Heart left ventricle (tissue), 16 donors: ENCODE measurements at regions of chr4 and their contacts with region 1.

Region 1: DNA sequence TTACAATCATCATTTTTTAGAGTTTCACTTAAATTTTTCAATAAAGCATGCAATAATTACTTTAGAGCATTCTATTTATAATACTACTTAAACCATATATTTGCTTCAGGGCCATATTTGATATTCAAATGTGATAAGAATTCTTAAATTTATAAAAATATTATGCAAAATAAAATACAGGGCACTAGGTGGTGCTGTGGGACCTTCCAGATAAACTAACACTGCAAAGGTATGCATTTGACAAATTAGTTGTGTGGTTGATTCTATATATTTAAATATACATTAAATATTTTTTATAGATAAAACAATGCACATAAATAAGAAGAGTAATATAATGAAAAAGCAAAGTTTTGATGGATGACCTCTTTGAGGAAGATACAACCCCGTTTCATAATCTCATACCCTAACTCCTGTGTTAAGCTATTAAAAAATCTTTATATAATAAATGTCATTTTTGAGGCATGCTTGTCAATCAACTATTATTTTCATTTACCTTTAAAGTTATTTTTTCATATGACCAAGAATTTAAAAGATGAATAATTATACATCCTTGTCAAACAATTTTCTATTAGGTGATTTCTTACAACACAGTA is 128.4 kb downstream of the REELD1 start:
- DNase-seq: no peak
- ATAC-seq: no peak
- H3K4me3 ChIP-seq: no peak overlapping the region
- H3K27ac ChIP-seq: no peak overlapping the region
- H3K4me1 ChIP-seq: no peaks in the 10 kb centered on the region
- H3K27me3 ChIP-seq: no peaks in the 10 kb centered on the region
- CTCF ChIP-seq: peak; percentile 52 to 79 (median 70)
- POLR2A ChIP-seq: no peak

Region 2: GRCh38 chr4:145956288-145956890 is 386.3 kb before region 1 on chr4:
- intact Hi-C with region 1: loop called in 1 of 10 experiments (anchors 10 kb)
- DNase-seq: peak in 2 of 5 donors; percentile 11 to 22
- ATAC-seq: peak in 1 of 4 donors; percentile 42
- H3K4me3 ChIP-seq: no peak overlapping the region
- H3K27ac ChIP-seq: no peak overlapping the region
- H3K4me1 ChIP-seq: no peaks in the 10 kb centered on the region
- H3K27me3 ChIP-seq: no peaks in the 10 kb centered on the region
- CTCF ChIP-seq: peak; percentile 60 to 80 (median 74)
- POLR2A ChIP-seq: no peak

Region 3: GRCh38 chr4:146243141-146243882 is 99.4 kb before region 1 on chr4:
- intact Hi-C with region 1: loop called in 1 of 10 experiments (anchors 5 kb)
- DNase-seq: peak in 2 of 5 donors; percentile 24 to 65
- ATAC-seq: peak in 1 of 4 donors; percentile 21
- H3K4me3 ChIP-seq: peak overlapping the region in 3 of 12 donors; percentile 1 to 38 (median 4)
- H3K27ac ChIP-seq: peak overlapping the region; percentile 76 to 96 (median 85)
- H3K4me1 ChIP-seq: peaks cover 0 to 54% (median 24%) of the 10 kb centered on the region in 12 donors
- H3K27me3 ChIP-seq: no peaks in the 10 kb centered on the region
- CTCF ChIP-seq: peak; percentile 15 to 58 (median 43)
- POLR2A ChIP-seq: no peak

Region 4: GRCh38 chr4:146273204-146273901 is 69.3 kb before region 1 on chr4:
- intact Hi-C with region 1: no loop called
- DNase-seq: no peak
- ATAC-seq: no peak
- H3K4me3 ChIP-seq: no peak overlapping the region
- H3K27ac ChIP-seq: no peak overlapping the region
- H3K4me1 ChIP-seq: peaks cover 0 to 11% (median 0%) of the 10 kb centered on the region in 12 donors
- H3K27me3 ChIP-seq: no peaks in the 10 kb centered on the region
- CTCF ChIP-seq: no peak
- POLR2A ChIP-seq: no peak

Region 5: GRCh38 chr4:146638801-146639605 is 296.3 kb after region 1 on chr4 and contains the start of gene POU4F2:
- intact Hi-C with region 1: loop called in 2 of 10 experiments (anchors 5 to 10 kb)
- DNase-seq: no peak
- ATAC-seq: no peak
- H3K4me3 ChIP-seq: peak within 1 kb of the TSS in 8 of 12 donors; percentile 3 to 26 (median 8)
- H3K27ac ChIP-seq: no peak within 1 kb of the TSS
- H3K4me1 ChIP-seq: peaks cover 0 to 23% (median 10%) of the 10 kb centered on the region in 12 donors
- H3K27me3 ChIP-seq: peaks cover 30 to 97% (median 69%) of the 10 kb centered on the region in 9 donors
- CTCF ChIP-seq: no peak
- POLR2A ChIP-seq: no peak
- total RNA-seq, gene POU4F2: not detected

Region 6: GRCh38 chr4:146916479-146917076 is 573.9 kb after region 1 on chr4:
- intact Hi-C with region 1: loop called (anchors 2 to 5 kb)
- DNase-seq: no peak
- ATAC-seq: no peak
- H3K4me3 ChIP-seq: no peak overlapping the region
- H3K27ac ChIP-seq: no peak overlapping the region
- H3K4me1 ChIP-seq: no peaks in the 10 kb centered on the region
- H3K27me3 ChIP-seq: peaks cover 0 to 47% (median 5%) of the 10 kb centered on the region in 9 donors
- CTCF ChIP-seq: peak; percentile 43 to 85 (median 70)
- POLR2A ChIP-seq: no peak

Region 7: DNA sequence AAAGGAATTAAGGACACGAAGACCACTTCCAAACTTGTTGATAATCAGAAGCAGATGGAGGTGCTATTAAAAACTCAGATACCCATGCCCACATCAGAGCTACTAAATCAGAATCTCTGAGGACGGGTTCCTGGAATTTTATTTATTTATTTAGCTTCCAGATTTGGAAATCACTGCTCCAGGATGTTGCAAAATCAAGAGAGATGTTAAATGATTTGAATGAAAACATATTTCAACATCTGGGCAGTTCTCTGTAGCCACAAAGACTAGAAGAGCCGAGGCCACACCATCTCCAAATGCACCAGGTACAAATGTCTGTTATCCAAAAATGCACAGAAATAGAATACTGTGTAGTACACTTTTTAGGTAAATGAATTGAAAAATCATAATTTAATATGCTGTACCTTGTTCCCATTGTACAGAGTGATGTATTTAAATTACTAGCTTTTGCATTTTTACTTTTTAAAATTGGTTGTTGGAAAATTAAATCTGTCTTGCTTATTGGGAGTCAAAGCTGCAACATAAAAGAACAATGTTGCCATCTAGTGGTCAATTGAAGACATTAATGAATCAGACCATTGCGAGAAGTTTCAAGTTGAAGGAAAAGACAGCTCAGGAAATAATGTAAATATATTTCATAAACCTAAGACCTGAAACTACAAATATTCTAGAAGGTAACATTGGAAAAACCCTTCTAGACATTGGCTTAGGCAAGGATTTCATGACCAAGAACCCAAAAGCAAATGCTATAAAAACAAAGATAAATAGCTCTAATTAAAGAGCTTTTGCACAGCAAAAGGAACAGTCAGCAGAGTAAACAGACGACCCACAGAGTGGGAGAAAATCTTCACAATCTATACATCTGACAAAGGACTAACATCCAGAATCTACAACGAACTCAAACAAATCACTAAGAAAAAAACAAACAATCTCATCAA is 754.2 kb after region 1 on chr4:
- intact Hi-C with region 1: loop called (anchors 5 to 10 kb)
- DNase-seq: no peak
- ATAC-seq: peak in 1 of 4 donors; percentile 49
- H3K4me3 ChIP-seq: no peak overlapping the region
- H3K27ac ChIP-seq: no peak overlapping the region
- H3K4me1 ChIP-seq: no peaks in the 10 kb centered on the region
- H3K27me3 ChIP-seq: no peaks in the 10 kb centered on the region
- CTCF ChIP-seq: peak; percentile 49 to 79 (median 68)
- POLR2A ChIP-seq: no peak